ENCODE measurements at regions of chr2 and their contacts with region 1.

Region 1: GRCh38 chr2:172465417-172466334 is 38.3 kb downstream of the ITGA6 start:
- DNase-seq: peak; percentile 83
- H3K4me3 Mint-ChIP-seq: no peak overlapping the region
- H3K27ac Mint-ChIP-seq: peak overlapping the region; percentile 96
- H3K4me1 Mint-ChIP-seq: peaks cover 59% of the 10 kb centered on the region
- H3K27me3 Mint-ChIP-seq: no peaks in the 10 kb centered on the region

Region 2: GRCh38 chr2:172172513-172173173 is 293.0 kb before region 1 on chr2:
- CTCF ChIA-PET with region 1: interaction called, 63 read pairs
- DNase-seq: peak; percentile 68
- H3K4me3 Mint-ChIP-seq: peak overlapping the region; percentile 53
- H3K27ac Mint-ChIP-seq: no peak overlapping the region
- H3K4me1 Mint-ChIP-seq: peaks cover 13% of the 10 kb centered on the region
- H3K27me3 Mint-ChIP-seq: peaks cover 40% of the 10 kb centered on the region

Region 3: GRCh38 chr2:172226244-172227061 is 239.2 kb before region 1 on chr2:
- CTCF ChIA-PET with region 1: interaction called, 11 read pairs
- DNase-seq: peak; percentile 68
- H3K4me3 Mint-ChIP-seq: no peak overlapping the region
- H3K27ac Mint-ChIP-seq: no peak overlapping the region
- H3K4me1 Mint-ChIP-seq: peaks cover 78% of the 10 kb centered on the region
- H3K27me3 Mint-ChIP-seq: peaks cover 16% of the 10 kb centered on the region

Region 4: GRCh38 chr2:172427256-172427989 is 38.3 kb before region 1 on chr2 and contains the start of gene ITGA6:
- CTCF ChIA-PET with region 1: interaction called, 128 read pairs
- DNase-seq: peak; percentile 84
- H3K4me3 Mint-ChIP-seq: peak within 1 kb of the TSS; percentile 83
- H3K27ac Mint-ChIP-seq: peak within 1 kb of the TSS; percentile 74
- H3K4me1 Mint-ChIP-seq: peaks cover 28% of the 10 kb centered on the region
- H3K27me3 Mint-ChIP-seq: peaks cover 28% of the 10 kb centered on the region

Region 5: GRCh38 chr2:172449911-172450550 is 15.6 kb before region 1 on chr2:
- CTCF ChIA-PET with region 1: interaction called, 26 read pairs
- DNase-seq: peak; percentile 49
- H3K4me3 Mint-ChIP-seq: no peak overlapping the region
- H3K27ac Mint-ChIP-seq: peak overlapping the region; percentile 16
- H3K4me1 Mint-ChIP-seq: peaks cover 60% of the 10 kb centered on the region
- H3K27me3 Mint-ChIP-seq: no peaks in the 10 kb centered on the region

Region 6: DNA sequence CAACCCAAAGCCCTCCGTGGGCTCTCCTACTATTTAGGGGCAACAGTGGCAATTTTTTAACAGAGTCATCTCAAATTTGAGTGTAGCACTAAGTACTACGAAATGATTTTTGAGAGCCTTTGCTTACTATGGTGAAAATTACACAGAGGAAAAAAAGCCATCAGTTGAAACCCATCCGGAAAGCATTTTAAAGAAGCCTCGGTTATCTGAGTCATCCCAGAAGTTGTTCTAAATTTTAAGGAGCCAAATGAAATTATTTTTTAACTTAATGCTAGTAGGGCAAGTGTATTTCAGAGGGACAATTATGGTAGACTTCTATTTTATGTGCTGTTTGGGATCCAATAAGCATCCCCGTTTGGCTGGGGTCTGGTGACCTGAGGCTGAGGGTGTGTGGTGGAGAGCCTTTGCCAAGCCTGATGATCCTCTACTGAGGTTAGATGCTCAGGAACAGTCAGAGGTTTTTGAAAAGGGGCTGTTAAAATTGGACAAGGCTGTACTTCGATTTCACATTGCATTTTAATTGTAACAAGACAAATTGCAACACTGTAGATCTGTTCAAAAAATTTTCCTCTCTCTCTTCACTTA is 316.9 kb after region 1 on chr2:
- CTCF ChIA-PET with region 1: no interaction called
- DNase-seq: no peak
- H3K4me3 Mint-ChIP-seq: no peak overlapping the region
- H3K27ac Mint-ChIP-seq: no peak overlapping the region
- H3K4me1 Mint-ChIP-seq: no peaks in the 10 kb centered on the region
- H3K27me3 Mint-ChIP-seq: peaks cover 23% of the 10 kb centered on the region

Measured in activated naive CD4-positive, alpha-beta T cell treated with anti-CD3 and anti-CD28 coated beads, Interleukin-2, amount 10 ng/mL, durations not matched to agents 7 days and 5 days (primary cell).